Activated CD4-positive, alpha-beta T cell treated with anti-CD3 and anti-CD28 coated beads, Interleukin-2, amount 10 ng/mL, durations not matched to agents 24 days and 14 days (primary cell): ENCODE measurements at regions of chr16 and their contacts with region 1.

Region 1: GRCh38 chr16:57863434-57864160 is 61.3 kb upstream of the KIFC3 start:
- DNase-seq: no peak
- H3K4me3 Mint-ChIP-seq: no peak overlapping the region
- H3K27ac Mint-ChIP-seq: no peak overlapping the region
- H3K4me1 Mint-ChIP-seq: peaks cover 3% of the 10 kb centered on the region
- H3K27me3 Mint-ChIP-seq: peaks cover 24% of the 10 kb centered on the region

Region 2: DNA sequence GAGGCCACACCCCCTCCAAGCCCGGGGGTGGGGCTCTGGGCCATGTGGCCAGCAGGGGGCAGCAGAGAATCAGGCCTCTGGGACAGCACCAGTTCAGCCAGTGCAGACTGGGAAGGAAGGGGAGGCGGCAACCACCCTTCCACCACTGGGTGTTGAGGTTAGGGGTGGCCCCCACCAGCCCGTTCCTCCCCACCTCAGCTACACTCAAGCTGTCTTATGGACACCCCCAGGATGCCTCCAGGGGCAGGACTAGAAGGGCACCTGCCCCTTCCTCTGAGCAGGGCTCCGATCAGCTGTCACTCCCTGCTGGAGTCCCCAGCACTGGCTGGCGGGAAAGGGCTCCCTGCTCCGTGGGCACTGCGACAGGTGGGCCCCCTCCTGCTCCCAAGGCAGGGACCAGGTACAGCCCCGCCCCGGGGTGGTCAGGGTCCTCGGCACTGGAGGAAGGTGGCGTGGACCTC is 106.2 kb before region 1 on chr16:
- intact Hi-C with region 1: loop called (anchors 10 kb)
- DNase-seq: peak; percentile 97
- H3K4me3 Mint-ChIP-seq: no peak overlapping the region
- H3K27ac Mint-ChIP-seq: no peak overlapping the region
- H3K4me1 Mint-ChIP-seq: no peaks in the 10 kb centered on the region
- H3K27me3 Mint-ChIP-seq: no peaks in the 10 kb centered on the region

Region 3: GRCh38 chr16:58820411-58820810 is 956.8 kb after region 1 on chr16:
- intact Hi-C with region 1: no loop called
- DNase-seq: no peak
- H3K4me3 Mint-ChIP-seq: no peak overlapping the region
- H3K27ac Mint-ChIP-seq: no peak overlapping the region
- H3K4me1 Mint-ChIP-seq: no peaks in the 10 kb centered on the region
- H3K27me3 Mint-ChIP-seq: no peaks in the 10 kb centered on the region